Breast epithelium (tissue), 4 donors: ENCODE measurements at regions of chr11 and their contacts with region 1.

Region 1: DNA sequence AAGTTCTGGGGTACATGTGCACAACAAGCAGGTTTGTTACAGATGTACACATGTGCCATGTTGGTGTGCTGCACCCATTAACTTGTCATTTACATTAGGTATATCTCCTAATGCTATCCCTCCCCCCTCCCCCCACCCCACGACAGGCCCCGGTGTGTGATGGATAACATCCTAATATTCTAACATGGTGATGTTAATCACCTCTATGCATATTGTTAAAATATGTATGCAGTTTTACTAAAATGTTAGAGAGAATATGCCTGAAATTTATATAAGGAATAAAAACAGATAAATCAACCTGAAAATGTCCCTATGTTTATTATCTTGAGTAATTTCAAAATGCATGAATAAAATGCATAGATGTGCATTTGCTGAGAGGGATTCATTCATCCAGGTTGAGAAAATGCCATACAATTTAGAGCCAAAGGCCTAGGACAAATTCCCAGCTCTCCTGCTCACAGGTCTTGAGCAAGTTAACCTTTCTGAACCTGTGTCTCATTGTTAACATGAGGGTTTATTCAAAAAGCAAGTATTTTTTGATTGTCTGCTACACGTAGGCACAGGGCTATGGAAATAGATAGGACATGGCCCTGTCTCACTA is 38.7 kb downstream of the APIP start:
- DNase-seq: no peak
- H3K4me3 ChIP-seq: no peak overlapping the region
- H3K27ac ChIP-seq: no peak overlapping the region
- H3K4me1 ChIP-seq: no peaks in the 10 kb centered on the region
- H3K27me3 ChIP-seq: no peaks in the 10 kb centered on the region
- CTCF ChIP-seq: no peak
- POLR2A ChIP-seq: no peak

Region 2: GRCh38 chr11:34809191-34810106 is 68.0 kb before region 1 on chr11:
- intact Hi-C with region 1: loop called (anchors 2 kb)
- DNase-seq: no peak
- H3K4me3 ChIP-seq: no peak overlapping the region
- H3K27ac ChIP-seq: no peak overlapping the region
- H3K4me1 ChIP-seq: no peaks in the 10 kb centered on the region
- H3K27me3 ChIP-seq: no peaks in the 10 kb centered on the region
- CTCF ChIP-seq: no peak
- POLR2A ChIP-seq: no peak

Region 3: DNA sequence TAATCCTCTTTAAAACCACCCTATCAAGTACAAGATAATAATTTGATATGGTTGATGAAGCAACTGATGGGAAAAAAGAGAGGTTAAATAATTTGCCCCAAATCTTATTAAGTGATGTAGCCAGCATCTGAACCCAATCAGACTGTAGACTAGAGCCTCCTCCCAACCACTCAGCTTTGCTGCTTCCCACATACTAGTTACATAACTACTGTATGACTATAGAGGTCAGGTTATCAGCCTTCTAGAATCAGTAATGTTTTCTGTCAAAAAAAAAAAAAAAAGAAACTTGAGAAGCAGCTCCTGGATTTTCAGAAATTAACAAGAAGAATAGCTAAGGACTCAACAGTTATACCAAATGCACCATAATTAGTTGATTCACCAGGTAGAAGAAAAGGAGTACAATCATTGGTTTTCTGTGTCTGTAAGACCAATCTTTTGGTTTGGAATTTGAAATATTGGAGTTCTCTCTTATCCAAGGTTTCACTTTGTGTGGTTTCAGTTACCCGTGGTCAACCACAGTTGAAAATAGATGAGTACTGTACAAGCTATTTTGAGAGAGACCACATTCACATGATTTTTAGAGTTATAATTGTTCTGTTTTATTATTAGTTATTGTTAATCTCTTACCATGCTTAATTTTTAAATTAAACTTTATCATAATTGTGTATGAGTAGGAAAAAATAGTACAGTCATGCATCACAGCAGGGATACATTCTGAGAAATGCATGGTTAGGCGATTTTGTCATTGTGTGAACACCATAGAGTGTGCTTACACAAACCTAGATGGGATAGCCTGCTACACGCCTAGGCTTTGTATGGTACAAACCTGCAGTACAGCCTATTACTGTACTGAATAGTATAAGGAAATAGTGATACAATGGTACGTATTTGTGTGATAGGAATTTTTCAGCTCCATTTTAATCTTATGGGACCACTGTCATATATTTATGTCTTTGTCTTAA is 111.1 kb after region 1 on chr11:
- intact Hi-C with region 1: no loop called
- DNase-seq: no peak
- H3K4me3 ChIP-seq: no peak overlapping the region
- H3K27ac ChIP-seq: no peak overlapping the region
- H3K4me1 ChIP-seq: no peaks in the 10 kb centered on the region
- H3K27me3 ChIP-seq: no peaks in the 10 kb centered on the region
- CTCF ChIP-seq: no peak
- POLR2A ChIP-seq: no peak